Sigmoid colon (tissue), 7 donors: ENCODE measurements at regions of chr19 and their contacts with region 1.

Region 1: GRCh38 chr19:42254989-42255765 is at the start of gene ERF:
- DNase-seq: peak; percentile 98
- H3K4me3 ChIP-seq: peak within 1 kb of the TSS; percentile 84 to 100 (median 98)
- H3K27ac ChIP-seq: peak within 1 kb of the TSS; percentile 99 to 100 (median 100)
- H3K4me1 ChIP-seq: peaks cover 0 to 49% (median 38%) of the 10 kb centered on the region in 4 donors
- H3K27me3 ChIP-seq: no peaks in the 10 kb centered on the region
- CTCF ChIP-seq: no peak
- EP300 ChIP-seq: peak in 1 of 4 donors; percentile 17
- POLR2A ChIP-seq: peak; percentile 33 to 53
- total RNA-seq, gene ERF: 18.9 to 39.3 (median 25.6) TPM

Region 2: DNA sequence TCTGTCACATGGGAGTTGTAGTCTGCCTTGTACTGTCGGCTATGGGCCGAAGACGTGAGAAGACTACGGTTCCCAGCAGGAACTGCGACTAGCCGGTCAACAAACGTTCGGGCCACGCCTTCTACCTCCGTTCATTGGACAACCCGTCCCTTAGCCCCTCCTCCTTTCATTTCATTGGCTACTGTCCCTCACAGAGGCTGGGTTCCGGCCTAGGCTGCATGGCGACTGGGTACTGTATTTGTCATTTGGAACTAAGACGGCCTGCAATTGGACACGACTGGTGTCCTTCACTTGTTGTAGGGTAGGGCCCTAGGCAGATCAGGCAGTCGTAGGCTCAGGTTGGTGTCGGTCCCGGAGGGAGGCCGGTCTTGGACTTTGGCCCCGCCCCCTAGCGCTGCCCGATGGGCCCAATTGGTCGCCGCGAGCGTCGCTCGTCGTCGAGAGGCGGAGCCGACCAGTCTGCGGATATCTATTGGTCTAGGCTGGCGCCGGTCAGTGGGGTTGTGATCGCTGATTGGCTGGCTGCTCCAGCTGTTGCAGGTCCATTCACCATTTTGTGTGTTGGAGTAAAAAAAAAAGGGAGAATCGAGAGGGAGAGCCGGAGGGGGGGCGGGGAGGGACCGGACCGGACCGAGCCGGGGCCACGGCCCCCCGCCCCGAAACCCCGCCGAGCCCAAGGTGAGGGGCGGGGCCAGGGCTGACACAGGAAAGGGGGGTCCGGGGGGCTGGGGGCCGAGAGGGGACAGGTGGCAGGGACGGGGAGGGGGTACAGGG is 13.7 kb after region 1 on chr19 and contains the start of gene CIC:
- intact Hi-C with region 1: loop called (anchors 1 kb)
- DNase-seq: peak; percentile 100
- H3K4me3 ChIP-seq: peak within 1 kb of the TSS; percentile 66 to 74 (median 68)
- H3K27ac ChIP-seq: peak within 1 kb of the TSS; percentile 94 to 99 (median 98)
- H3K4me1 ChIP-seq: peaks cover 0 to 32% (median 29%) of the 10 kb centered on the region in 4 donors
- H3K27me3 ChIP-seq: no peaks in the 10 kb centered on the region
- CTCF ChIP-seq: no peak
- EP300 ChIP-seq: no peak
- POLR2A ChIP-seq: no peak
- total RNA-seq, gene CIC: 16.0 to 31.3 (median 24.9) TPM

Region 3: GRCh38 chr19:42283143-42284065 is 28.2 kb after region 1 on chr19:
- intact Hi-C with region 1: loop called (anchors 2 kb)
- DNase-seq: peak; percentile 99
- H3K4me3 ChIP-seq: peak overlapping the region; percentile 18 to 76 (median 70)
- H3K27ac ChIP-seq: peak overlapping the region; percentile 94 to 99 (median 96)
- H3K4me1 ChIP-seq: peaks cover 0 to 74% (median 65%) of the 10 kb centered on the region in 4 donors
- H3K27me3 ChIP-seq: no peaks in the 10 kb centered on the region
- CTCF ChIP-seq: no peak
- EP300 ChIP-seq: no peak
- POLR2A ChIP-seq: peak; percentile 57 to 69